ENCODE measurements at regions of chr2 and their contacts with region 1.

Region 1: DNA sequence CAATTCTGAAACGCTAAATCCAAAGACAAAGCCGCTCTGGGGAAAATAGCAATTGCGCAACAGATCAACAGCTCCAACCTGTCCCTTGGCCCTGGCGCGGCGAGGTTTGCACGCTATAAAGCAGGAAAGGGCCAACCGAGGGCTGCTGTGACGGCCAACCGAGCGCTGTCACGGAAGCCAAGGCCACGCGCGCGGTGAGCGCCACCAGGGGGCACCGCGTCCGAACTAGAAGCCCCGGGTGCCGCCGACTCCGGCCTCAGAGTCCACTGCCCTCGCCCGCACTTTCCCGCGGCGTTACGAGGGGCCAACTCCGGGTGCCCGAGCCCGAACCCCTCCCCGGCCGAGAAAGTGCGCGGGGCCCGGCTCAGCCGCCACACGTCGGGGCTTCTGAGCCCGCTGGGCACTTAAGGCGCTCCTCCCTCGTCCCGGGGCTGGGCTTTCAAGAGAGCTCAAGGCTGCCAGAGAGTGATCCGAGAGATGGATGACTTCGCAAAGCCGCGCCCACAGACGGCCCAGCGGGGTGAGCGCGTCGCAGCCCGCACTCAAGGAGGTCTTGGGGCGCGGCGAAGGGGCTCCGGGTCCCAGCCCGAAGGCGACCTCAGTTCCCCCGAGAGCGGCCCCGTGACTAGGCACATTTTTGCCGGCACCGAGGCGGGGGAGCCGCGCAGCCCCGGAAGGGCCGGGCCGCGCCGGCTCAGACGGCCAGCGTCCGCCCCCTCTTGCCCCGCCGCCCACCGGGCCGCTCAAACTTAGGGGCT is 897 bp downstream of the NFE2L2 start:
- DNase-seq: peak; percentile 99
- ATAC-seq: peak; percentile 90

Region 2: GRCh38 chr2:177164584-177165052 is 99.0 kb before region 1 on chr2:
- intact Hi-C with region 1: loop called (anchors 10 kb)
- DNase-seq: peak; percentile 94
- ATAC-seq: peak; percentile 94

Region 3: DNA sequence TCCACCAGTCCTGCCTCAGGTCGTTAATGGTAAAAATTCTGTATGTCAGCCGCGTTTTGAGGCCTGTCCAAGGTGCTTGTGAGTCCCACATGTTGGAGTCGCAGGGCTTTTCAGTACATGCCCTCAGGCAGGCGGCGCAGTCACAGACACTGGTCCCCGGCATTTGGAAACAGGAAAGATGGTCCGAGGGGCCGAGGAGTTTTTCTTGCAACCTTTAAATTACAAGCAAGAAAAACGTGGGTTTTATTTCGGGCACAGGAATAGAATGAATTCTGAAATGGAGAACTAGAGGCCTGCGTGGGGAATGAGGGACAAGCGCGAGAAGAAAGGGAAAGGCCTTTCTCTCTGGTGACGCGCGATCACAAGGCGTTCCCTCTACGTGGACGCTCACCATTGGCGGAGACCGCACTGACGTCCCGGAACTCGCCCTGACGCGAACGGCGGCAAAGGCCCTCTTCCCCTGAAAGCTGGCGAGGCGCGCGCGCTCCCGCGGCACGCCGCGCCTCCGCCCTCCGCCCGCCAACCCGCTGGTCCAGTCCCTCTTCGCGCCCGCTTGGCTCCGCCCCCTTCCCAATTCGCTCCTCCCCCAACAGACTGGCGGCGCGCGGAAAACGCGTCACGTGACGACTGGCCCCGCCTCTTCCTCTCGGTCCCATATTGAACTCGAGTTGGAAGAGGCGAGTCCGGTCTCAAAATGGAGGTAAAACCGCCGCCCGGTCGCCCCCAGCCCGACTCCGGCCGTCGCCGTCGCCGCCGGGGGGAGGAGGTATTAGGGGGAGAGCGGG is 51.3 kb before region 1 on chr2 and contains the start of gene HNRNPA3:
- intact Hi-C with region 1: loop called (anchors 2 kb)
- DNase-seq: peak; percentile 100
- ATAC-seq: peak; percentile 98
- total RNA-seq, gene HNRNPA3: 161 TPM

Measured in sciatic nerve (tissue), 2 donors.